Activated CD8-positive, alpha-beta memory T cell treated with anti-CD3 and anti-CD28 coated beads, Interleukin-2, amount 10 ng/mL, durations not matched to agents 7 days and 5 days (primary cell): ENCODE measurements at regions of chr15 and their contacts with region 1.

Region 1: GRCh38 chr15:60916679-60917460 is 312.2 kb downstream of the RORA start:
- DNase-seq: peak; percentile 89
- ATAC-seq: peak; percentile 94
- H3K4me3 Mint-ChIP-seq: no peak overlapping the region
- H3K27ac Mint-ChIP-seq: peak overlapping the region; percentile 30
- H3K4me1 Mint-ChIP-seq: peaks cover 13% of the 10 kb centered on the region
- H3K27me3 Mint-ChIP-seq: peaks cover 4% of the 10 kb centered on the region

Region 2: GRCh38 chr15:60358935-60359682 is 557.8 kb before region 1 on chr15:
- CTCF ChIA-PET with region 1: interaction called, 13 read pairs
- DNase-seq: no peak
- ATAC-seq: no peak
- H3K4me3 Mint-ChIP-seq: no peak overlapping the region
- H3K27ac Mint-ChIP-seq: no peak overlapping the region
- H3K4me1 Mint-ChIP-seq: peaks cover 26% of the 10 kb centered on the region
- H3K27me3 Mint-ChIP-seq: no peaks in the 10 kb centered on the region

Region 3: DNA sequence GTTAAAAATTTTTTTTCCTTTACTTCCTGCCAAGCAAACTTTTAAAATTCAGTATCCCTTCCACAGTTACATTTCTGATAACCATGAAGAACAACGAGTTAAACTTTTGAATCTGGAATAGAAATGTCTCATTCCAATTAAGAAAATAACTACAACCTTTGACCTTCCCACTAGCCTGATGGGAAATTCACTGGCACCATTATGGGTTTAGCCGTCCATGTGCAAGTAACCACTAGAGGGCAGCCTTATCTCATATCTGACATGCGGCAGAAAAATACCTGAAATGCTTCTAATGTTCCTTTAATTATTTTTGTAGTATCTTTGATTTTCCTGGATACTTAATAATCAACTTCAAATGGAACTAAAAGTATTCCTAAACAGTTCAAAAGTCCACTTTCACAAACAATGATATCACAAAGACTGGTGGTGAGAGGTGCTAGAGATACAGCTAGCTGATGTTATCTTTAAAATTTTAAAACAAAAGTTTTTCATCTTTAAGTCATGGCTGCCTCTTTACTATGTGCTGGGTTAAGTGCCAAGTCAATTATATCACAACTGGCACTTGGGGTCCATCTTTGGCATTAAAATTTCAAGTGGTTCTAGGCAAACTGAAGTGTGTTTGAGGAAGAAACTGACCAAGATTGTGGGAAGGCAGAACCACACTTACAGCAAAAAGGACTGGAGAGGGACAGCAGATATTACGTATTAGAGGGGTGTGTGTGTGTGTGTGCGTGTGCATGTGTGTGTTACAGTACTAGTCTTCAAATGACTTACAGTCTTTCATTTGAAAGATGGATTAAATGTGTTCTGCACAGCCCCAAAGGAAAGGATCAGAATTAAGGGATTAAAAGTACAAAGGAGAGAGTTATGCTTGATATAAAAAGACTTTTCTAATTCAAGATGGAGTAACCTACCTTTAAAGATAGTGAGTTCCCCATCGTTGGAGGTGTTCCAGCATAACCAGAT is 330.8 kb before region 1 on chr15:
- CTCF ChIA-PET with region 1: interaction called, 75 read pairs
- DNase-seq: peak; percentile 79
- ATAC-seq: peak; percentile 22
- H3K4me3 Mint-ChIP-seq: peak overlapping the region; percentile 57
- H3K27ac Mint-ChIP-seq: peak overlapping the region; percentile 89
- H3K4me1 Mint-ChIP-seq: peaks cover 84% of the 10 kb centered on the region
- H3K27me3 Mint-ChIP-seq: peaks cover 2% of the 10 kb centered on the region

Region 4: GRCh38 chr15:60649845-60650548 is 266.9 kb before region 1 on chr15:
- CTCF ChIA-PET with region 1: interaction called, 15 read pairs
- DNase-seq: peak; percentile 66
- ATAC-seq: peak; percentile 86
- H3K4me3 Mint-ChIP-seq: peak overlapping the region; percentile 63
- H3K27ac Mint-ChIP-seq: peak overlapping the region; percentile 88
- H3K4me1 Mint-ChIP-seq: peaks cover 40% of the 10 kb centered on the region
- H3K27me3 Mint-ChIP-seq: peaks cover 6% of the 10 kb centered on the region

Region 5: GRCh38 chr15:60932051-60932915 is 15.4 kb after region 1 on chr15:
- CTCF ChIA-PET with region 1: interaction called, 18 read pairs
- DNase-seq: peak; percentile 75
- ATAC-seq: peak; percentile 93
- H3K4me3 Mint-ChIP-seq: no peak overlapping the region
- H3K27ac Mint-ChIP-seq: no peak overlapping the region
- H3K4me1 Mint-ChIP-seq: peaks cover 14% of the 10 kb centered on the region
- H3K27me3 Mint-ChIP-seq: peaks cover 42% of the 10 kb centered on the region

Region 6: GRCh38 chr15:60961541-60962485 is 44.9 kb after region 1 on chr15:
- CTCF ChIA-PET with region 1: no interaction called
- DNase-seq: no peak
- ATAC-seq: no peak
- H3K4me3 Mint-ChIP-seq: no peak overlapping the region
- H3K27ac Mint-ChIP-seq: no peak overlapping the region
- H3K4me1 Mint-ChIP-seq: no peaks in the 10 kb centered on the region
- H3K27me3 Mint-ChIP-seq: peaks cover 6% of the 10 kb centered on the region